ENCODE measurements at regions of chr12 and their contacts with region 1.

Region 1: GRCh38 chr12:47870175-47870781 is 34.5 kb downstream of the VDR start:
- H3K4me3 Mint-ChIP-seq: no peak overlapping the region
- H3K27ac Mint-ChIP-seq: peak overlapping the region; percentile 97
- H3K4me1 Mint-ChIP-seq: peaks cover 97% of the 10 kb centered on the region
- H3K27me3 Mint-ChIP-seq: no peaks in the 10 kb centered on the region

Region 2: DNA sequence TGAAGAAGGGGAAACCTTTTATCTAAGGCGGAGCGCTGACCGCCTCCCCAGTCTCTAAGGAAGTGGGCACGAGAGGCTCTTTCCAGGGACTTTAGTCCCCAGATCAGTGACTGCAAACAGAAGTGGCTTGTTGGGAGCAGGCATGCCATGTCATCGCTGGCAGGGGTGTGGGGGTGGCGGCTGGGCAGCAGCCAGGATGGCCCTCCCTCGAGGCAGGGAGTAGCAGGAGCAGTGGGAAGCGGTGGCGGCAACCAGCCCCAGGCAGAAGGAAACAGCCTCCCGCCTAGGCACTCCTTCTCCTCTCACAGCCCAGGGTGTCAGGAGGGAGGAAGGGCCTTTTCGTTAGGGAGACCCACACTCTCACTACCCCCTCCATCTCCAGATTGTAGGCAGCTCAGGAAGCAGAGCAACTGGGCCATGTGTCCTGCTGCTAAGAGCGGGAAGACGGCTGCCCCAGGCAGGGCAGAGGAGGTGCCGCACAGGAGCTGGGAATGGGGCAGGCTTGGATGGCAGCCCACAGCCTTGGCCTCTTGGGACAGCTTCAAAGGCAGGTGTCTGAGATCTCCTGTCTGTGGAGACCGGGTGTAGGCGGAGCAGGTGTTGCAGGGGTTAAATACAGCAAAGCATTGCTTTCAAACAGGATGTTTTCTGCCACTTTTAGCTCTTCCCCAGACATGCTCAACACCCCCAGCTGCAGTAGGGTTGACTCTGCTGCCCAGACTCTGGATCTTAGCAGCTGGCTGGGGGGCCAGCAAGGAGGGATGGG is 12.7 kb after region 1 on chr12:
- intact Hi-C with region 1: loop called (anchors 2 kb)
- H3K4me3 Mint-ChIP-seq: peak overlapping the region; percentile 60
- H3K27ac Mint-ChIP-seq: peak overlapping the region; percentile 84
- H3K4me1 Mint-ChIP-seq: peaks cover 85% of the 10 kb centered on the region
- H3K27me3 Mint-ChIP-seq: no peaks in the 10 kb centered on the region

Region 3: DNA sequence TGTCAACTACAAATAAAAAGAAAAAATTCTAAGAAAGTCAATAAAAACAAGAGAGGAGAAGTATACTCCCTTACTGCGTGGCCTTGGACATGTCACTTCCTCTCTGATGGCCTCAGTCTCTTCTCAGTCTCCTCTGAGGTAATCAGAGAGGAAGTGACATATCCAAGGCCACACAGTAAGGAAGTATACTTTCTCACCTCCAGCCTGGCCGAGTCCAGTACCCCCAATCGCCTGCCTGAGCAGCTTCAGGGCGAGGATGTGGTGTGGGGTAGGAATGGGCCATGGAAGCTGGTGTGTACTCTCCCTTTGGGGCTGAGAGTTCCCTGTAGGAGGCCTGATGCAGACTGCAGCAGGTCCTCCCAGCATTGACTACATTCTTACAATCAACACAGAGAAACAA is 18.8 kb after region 1 on chr12:
- intact Hi-C with region 1: loop called (anchors 2 kb)
- H3K4me3 Mint-ChIP-seq: peak overlapping the region; percentile 30
- H3K27ac Mint-ChIP-seq: peak overlapping the region; percentile 95
- H3K4me1 Mint-ChIP-seq: peaks cover 94% of the 10 kb centered on the region
- H3K27me3 Mint-ChIP-seq: no peaks in the 10 kb centered on the region

Region 4: DNA sequence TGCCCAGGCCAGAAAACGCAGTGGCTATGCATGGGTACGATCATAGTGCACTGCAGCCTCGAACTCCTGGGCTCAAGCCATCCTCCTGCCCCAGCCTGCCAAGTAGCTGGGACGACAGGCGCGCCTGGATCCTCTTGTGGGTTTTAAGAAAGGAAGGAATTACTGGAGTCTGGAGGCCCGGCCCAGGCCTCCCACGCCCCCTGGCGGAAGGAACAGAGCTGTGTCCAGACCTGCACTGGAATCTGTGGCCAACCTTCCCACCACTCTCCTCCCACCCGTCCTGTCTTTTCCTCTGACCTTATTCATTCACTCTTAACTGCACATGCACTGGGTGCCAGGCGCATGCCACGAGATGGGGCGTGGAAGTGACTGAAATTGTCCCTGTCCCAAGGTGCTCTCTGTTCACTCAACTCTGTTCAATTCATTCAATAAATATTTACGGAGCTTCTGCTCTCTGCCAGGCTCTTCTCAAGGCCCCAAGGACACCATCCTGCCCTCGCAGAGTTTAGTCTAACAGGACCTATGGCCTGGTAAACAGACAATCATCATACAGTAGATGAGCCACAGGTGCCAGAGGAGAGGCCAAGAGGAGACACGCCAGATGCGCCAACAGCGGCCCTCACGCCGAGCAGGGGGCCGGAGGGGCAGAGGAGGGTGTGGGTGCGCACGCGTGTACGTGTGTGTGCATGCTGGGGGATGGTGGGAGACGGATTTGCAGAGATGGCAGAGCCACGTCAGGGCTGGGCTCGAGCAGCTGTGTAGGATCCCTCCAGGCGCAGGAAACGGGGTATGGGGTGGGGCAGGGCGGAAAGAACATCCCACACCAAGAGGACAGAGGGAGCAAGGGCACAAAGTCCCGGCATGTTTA is 79.4 kb after region 1 on chr12:
- intact Hi-C with region 1: loop called (anchors 1 kb)
- H3K4me3 Mint-ChIP-seq: no peak overlapping the region
- H3K27ac Mint-ChIP-seq: peak overlapping the region; percentile 49
- H3K4me1 Mint-ChIP-seq: peaks cover 27% of the 10 kb centered on the region
- H3K27me3 Mint-ChIP-seq: peaks cover 12% of the 10 kb centered on the region